Activated naive CD4-positive, alpha-beta T cell treated with anti-CD3 and anti-CD28 coated beads for 36 hours (primary cell): ENCODE measurements at regions of chr12 and their contacts with region 1.

Region 1: GRCh38 chr12:50763639-50764285 is at the start of gene ATF1:
- DNase-seq: peak; percentile 91
- H3K4me3 Mint-ChIP-seq: peak within 1 kb of the TSS; percentile 83
- H3K27ac Mint-ChIP-seq: peak within 1 kb of the TSS; percentile 94
- H3K4me1 Mint-ChIP-seq: peaks cover 33% of the 10 kb centered on the region
- H3K27me3 Mint-ChIP-seq: no peaks in the 10 kb centered on the region
- total RNA-seq, gene ATF1: 43.3 to 48.5 TPM

Region 2: DNA sequence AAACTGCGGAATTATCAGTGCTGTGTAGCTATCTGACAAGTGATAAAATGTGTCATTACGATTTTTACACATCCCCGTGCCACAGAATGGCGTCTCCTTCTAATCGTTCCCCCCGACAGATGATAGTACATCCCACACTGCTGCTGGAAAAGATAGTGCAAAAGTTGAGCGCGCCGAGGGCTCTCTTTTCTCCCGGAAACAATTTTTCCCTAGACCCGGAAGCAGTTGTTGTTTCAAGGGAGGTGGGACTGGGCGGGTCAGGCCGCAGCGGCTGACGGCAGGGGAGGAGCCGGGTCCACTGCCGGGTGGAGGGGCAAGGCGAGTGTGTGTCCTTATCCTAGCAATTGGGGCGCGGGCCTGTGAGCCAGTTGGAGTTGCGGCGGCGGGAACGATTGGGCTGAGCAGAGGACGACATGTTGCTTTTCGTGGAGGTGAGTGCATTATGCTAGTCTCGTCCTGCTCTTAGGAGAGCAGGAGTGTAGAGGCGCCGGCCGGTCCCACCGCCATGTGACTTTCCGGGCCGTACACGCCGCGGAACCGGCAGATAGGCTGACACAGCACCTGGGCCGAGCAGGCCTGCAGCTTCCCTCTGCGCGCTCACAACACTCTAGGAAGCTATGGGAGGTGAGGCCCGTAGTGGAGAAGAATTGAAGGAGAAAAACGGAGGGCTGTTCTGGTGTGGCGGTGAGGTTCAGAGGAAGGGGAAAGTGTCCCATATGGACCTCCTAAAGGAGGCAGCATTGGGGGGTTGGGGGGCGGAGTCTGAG is 363.0 kb before region 1 on chr12 and contains the start of gene LARP4:
- CTCF ChIA-PET with region 1: no interaction called
- intact Hi-C with region 1: loop called (anchors 1 kb)
- DNase-seq: peak; percentile 94
- H3K4me3 Mint-ChIP-seq: peak within 1 kb of the TSS; percentile 99
- H3K27ac Mint-ChIP-seq: peak within 1 kb of the TSS; percentile 87
- H3K4me1 Mint-ChIP-seq: peaks cover 19% of the 10 kb centered on the region
- H3K27me3 Mint-ChIP-seq: peaks cover 2% of the 10 kb centered on the region
- total RNA-seq, gene LARP4: 44.7 to 44.9 TPM

Region 3: GRCh38 chr12:50825372-50825838 is 61.6 kb after region 1 on chr12:
- CTCF ChIA-PET with region 1: interaction called, 10 read pairs
- intact Hi-C with region 1: loop called (anchors 1 kb)
- DNase-seq: no peak
- H3K4me3 Mint-ChIP-seq: no peak overlapping the region
- H3K27ac Mint-ChIP-seq: peak overlapping the region; percentile 52
- H3K4me1 Mint-ChIP-seq: peaks cover 10% of the 10 kb centered on the region
- H3K27me3 Mint-ChIP-seq: no peaks in the 10 kb centered on the region

Region 4: GRCh38 chr12:51217968-51218606 is 454.3 kb after region 1 on chr12 and contains the start of gene POU6F1:
- CTCF ChIA-PET with region 1: no interaction called
- intact Hi-C with region 1: loop called (anchors 10 kb)
- DNase-seq: peak; percentile 72
- H3K4me3 Mint-ChIP-seq: peak within 1 kb of the TSS; percentile 75
- H3K27ac Mint-ChIP-seq: peak within 1 kb of the TSS; percentile 84
- H3K4me1 Mint-ChIP-seq: peaks cover 15% of the 10 kb centered on the region
- H3K27me3 Mint-ChIP-seq: no peaks in the 10 kb centered on the region
- total RNA-seq, gene POU6F1: 7.8 TPM